Heart left ventricle (tissue), 16 donors: ENCODE measurements at regions of chr7 and their contacts with region 1.

Region 1: DNA sequence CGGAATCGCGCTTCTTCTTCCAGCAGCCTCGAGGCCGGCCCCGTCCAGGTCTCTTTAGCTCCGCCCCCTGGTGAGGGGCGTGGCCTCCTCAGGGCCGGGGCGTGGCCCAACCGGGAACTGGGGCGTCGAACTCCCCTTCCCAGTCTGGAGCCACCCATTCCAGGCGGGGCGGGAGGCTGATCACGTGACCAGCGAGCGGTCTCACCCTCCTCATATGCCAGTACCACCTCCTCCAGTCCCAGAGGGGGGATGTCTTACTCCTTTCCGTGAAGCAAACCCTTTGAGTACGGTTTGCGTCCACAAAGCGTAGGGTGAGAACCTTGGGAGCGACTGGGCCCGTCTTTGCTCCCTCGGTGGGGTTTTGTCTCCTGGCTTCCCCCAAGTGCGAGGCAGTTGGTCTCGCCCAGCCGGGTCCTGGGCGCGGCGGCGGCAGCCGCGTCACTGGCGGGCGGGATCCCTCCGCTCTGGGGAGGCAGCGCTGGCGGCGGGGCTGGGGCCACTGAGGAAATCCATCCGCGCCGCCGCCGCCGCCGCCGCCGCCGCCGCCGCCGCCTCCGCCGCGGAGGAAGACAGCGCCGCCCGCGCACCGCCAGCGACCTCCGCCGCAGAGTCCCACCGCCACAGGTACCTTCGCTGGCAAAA is at the start of gene GNB2:
- DNase-seq: peak; percentile 99 to 100 (median 99)
- ATAC-seq: peak; percentile 89 to 96 (median 92)
- H3K4me3 ChIP-seq: peak within 1 kb of the TSS; percentile 79 to 100 (median 96)
- H3K27ac ChIP-seq: peak within 1 kb of the TSS; percentile 88 to 100 (median 98)
- H3K4me1 ChIP-seq: peaks cover 0 to 35% (median 12%) of the 10 kb centered on the region in 12 donors
- H3K27me3 ChIP-seq: no peaks in the 10 kb centered on the region
- CTCF ChIP-seq: no peak
- POLR2A ChIP-seq: peak; percentile 34 to 77
- total RNA-seq, gene GNB2: 94.8 to 188 (median 122) TPM

Region 2: DNA sequence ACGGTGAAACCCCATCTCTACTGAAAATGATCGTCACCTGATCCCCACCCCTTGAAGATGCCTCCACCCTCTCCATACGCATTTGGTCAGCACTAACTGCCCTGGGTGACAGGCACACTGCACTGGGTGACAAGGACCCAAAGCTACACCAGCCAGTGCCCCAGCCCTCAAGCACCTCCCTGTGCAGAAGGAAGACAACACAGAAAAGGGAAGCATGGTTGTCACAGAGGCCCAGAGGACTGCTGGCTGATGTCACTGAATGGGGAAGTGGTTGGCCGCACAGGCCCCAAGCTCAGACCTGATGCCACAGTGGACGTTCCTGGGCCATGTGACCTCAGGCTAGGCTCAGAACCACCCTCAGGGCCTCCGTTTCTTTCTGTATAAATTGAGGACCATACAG is 304.3 kb before region 1 on chr7:
- intact Hi-C with region 1: no loop called
- DNase-seq: peak; percentile 64 to 84 (median 72)
- ATAC-seq: peak; percentile 28 to 74 (median 61)
- H3K4me3 ChIP-seq: no peak overlapping the region
- H3K27ac ChIP-seq: peak overlapping the region in 7 of 12 donors; percentile 20 to 88 (median 51)
- H3K4me1 ChIP-seq: peaks cover 0 to 79% (median 0%) of the 10 kb centered on the region in 12 donors
- H3K27me3 ChIP-seq: no peaks in the 10 kb centered on the region
- CTCF ChIP-seq: no peak
- POLR2A ChIP-seq: no peak

Region 3: GRCh38 chr7:100563809-100564400 is 109.5 kb before region 1 on chr7:
- intact Hi-C with region 1: loop called in 1 of 10 experiments (anchors 5 kb)
- DNase-seq: peak; percentile 78 to 88 (median 81)
- ATAC-seq: peak; percentile 37 to 70 (median 63)
- H3K4me3 ChIP-seq: no peak overlapping the region
- H3K27ac ChIP-seq: no peak overlapping the region
- H3K4me1 ChIP-seq: peaks cover 0 to 13% (median 3%) of the 10 kb centered on the region in 12 donors
- H3K27me3 ChIP-seq: no peaks in the 10 kb centered on the region
- CTCF ChIP-seq: peak; percentile 89 to 96 (median 94)
- POLR2A ChIP-seq: no peak

Region 4: GRCh38 chr7:100604028-100604975 is 69.1 kb before region 1 on chr7:
- intact Hi-C with region 1: loop called in 3 of 10 experiments (anchors 1 to 5 kb)
- DNase-seq: peak; percentile 76 to 92 (median 83)
- ATAC-seq: peak; percentile 67 to 82 (median 74)
- H3K4me3 ChIP-seq: peak overlapping the region; percentile 48 to 96 (median 76)
- H3K27ac ChIP-seq: peak overlapping the region; percentile 2 to 90 (median 79)
- H3K4me1 ChIP-seq: peaks cover 0 to 34% (median 12%) of the 10 kb centered on the region in 12 donors
- H3K27me3 ChIP-seq: no peaks in the 10 kb centered on the region
- CTCF ChIP-seq: peak; percentile 24 to 64 (median 52)
- POLR2A ChIP-seq: peak in 1 of 2 donors; percentile 64

Region 5: DNA sequence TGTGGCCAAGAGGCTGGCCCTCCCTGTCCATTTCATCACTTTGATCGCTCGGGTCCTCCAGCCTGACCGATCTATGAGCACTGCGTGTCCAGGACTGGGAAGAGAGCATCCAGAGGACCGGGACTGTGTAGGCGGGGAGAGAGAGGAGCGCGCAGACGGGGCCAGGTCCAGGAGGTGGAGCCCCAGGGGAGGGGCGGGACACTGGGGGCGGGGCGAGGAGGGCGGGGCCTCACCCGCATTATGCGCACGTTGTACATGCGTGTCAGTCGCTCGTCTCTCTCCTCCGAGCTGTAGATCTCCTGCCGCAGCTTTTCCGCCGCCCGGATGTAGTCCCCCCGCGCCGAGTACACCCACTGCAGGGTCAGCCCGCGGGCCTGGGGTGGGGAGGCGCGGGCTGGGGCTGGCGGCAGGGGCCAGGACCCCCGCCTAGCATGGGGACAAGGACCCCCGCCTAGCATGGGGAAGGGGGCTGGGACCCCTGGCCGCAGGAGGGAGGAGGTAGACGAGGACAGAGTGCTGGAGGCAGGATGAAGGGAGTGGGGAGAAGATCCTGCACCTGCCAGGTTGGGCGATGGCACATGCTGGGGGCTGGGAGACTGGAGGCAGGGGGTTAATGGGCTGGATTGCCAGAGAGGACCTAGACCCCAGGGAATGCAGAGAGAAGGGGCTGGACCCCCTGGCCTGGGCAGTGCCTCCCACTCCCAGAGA is 46.7 kb before region 1 on chr7:
- intact Hi-C with region 1: loop called in 2 of 10 experiments (anchors 5 kb)
- DNase-seq: peak; percentile 78 to 91 (median 84)
- ATAC-seq: peak; percentile 89 to 99 (median 96)
- H3K4me3 ChIP-seq: peak overlapping the region in 9 of 12 donors; percentile 26 to 51 (median 43)
- H3K27ac ChIP-seq: peak overlapping the region in 1 of 12 donors; percentile 67
- H3K4me1 ChIP-seq: peaks cover 0 to 12% (median 4%) of the 10 kb centered on the region in 12 donors
- H3K27me3 ChIP-seq: no peaks in the 10 kb centered on the region
- CTCF ChIP-seq: no peak
- POLR2A ChIP-seq: no peak

Region 6: DNA sequence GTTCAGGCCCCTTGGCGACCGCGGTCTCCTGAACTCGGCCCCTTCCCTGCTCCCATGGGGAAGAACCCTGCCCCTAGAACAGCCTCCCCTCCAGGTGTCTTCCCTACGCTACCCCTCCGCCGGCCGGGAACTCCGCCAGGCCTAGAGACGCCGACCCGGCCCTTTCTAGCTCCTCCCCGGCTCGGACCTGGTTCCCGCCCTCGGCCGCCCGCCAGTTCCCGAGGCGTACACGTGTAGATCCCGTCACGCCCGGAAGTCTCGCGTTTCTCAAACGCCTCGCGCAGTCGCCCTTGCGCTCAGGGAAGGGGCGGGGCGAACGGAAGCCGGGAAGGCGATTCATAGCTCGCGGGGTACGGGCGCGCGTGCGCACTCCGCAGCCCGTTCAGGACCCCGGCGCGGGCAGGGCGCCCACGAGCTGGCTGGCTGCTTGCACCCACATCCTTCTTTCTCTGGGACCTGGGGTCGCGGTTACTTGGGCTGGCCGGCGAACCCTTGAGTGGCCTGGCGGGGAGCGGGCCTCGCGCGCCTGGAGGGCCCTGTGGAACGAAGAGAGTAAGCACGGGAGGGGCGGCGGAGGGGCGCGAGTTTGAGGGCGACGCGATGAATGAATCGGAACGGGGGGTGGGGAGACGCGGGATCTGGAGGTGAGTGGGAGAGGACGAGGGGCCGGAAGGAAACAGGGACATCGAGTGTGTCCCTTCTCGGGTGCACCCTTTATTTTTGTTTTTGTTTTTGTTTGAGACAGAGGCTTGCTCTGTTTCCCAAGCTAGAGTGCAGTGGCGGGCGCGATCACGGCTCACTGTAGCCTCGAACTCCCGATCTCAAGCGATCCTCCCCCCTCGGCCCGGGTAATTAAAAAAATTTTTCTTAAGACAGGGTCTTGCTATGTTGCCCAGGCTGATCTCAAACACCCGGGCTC is 32.6 kb after region 1 on chr7 and contains the start of gene POP7:
- intact Hi-C with region 1: loop called in 1 of 10 experiments (anchors 1 kb)
- DNase-seq: peak; percentile 99 to 100 (median 99)
- ATAC-seq: peak; percentile 96 to 99 (median 98)
- H3K4me3 ChIP-seq: peak within 1 kb of the TSS; percentile 53 to 88 (median 77)
- H3K27ac ChIP-seq: peak within 1 kb of the TSS; percentile 91 to 99 (median 94)
- H3K4me1 ChIP-seq: peaks cover 0 to 28% (median 18%) of the 10 kb centered on the region in 12 donors
- H3K27me3 ChIP-seq: no peaks in the 10 kb centered on the region
- CTCF ChIP-seq: no peak
- POLR2A ChIP-seq: peak in 1 of 2 donors; percentile 71
- total RNA-seq, gene POP7: 24.1 to 41.3 (median 28.9) TPM